ENCODE measurements at regions of chr4 and their contacts with region 1.

Region 1: DNA sequence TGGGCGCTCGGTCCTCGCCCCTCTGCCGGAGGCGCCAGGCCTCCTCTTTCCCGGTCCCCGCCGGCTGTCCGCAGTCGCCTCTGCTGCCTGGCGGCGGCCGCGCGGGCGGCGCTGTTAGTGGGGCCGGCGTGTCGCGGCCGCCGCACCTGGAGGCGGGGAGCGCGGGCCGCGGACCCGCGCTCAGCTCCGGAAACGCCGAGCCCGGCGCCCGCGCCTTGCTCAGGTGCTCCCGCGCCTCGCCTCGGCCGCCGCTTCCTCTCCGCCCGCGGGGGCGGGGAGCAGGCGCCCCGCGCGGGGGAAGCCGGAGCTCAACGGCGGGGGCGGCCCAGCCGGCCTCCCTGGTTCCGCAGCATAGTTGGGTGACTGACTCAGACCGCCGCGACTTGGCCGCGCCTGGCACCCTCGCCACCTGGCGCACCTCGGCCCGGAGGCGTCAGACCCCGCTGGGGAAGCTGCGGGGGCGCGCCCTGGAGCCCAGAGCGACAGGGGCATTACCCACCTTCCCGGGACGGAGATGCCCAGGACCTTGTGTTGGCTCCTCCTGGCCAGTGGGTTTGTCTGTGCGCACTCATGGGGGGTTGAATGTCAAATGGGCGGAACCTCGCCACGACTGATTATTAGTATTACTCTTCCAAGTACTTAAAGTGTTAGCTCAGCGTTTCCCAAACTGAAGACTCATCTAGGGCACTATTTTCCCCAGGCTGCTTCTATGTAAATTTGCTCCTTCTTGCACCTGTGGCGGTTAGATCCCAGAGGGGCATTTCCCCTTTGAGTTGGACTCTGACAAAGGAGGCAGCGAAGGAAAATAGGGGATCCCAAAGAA is at the start of gene ARAP2:
- DNase-seq: peak; percentile 78
- H3K4me3 Mint-ChIP-seq: peak within 1 kb of the TSS; percentile 95
- H3K27ac Mint-ChIP-seq: peak within 1 kb of the TSS; percentile 92
- H3K4me1 Mint-ChIP-seq: peaks cover 40% of the 10 kb centered on the region
- H3K27me3 Mint-ChIP-seq: peaks cover 5% of the 10 kb centered on the region
- total RNA-seq, gene ARAP2: 70.7 to 76.4 TPM

Region 2: GRCh38 chr4:36255577-36255976 is 11.1 kb after region 1 on chr4:
- CTCF ChIA-PET with region 1: interaction called, 37 read pairs
- POLR2A ChIA-PET with region 1: interaction called, 117 read pairs
- DNase-seq: peak; percentile 73
- H3K4me3 Mint-ChIP-seq: peak overlapping the region; percentile 68
- H3K27ac Mint-ChIP-seq: peak overlapping the region; percentile 96
- H3K4me1 Mint-ChIP-seq: peaks cover 46% of the 10 kb centered on the region
- H3K27me3 Mint-ChIP-seq: no peaks in the 10 kb centered on the region

Region 3: GRCh38 chr4:36285784-36286480 is 41.5 kb after region 1 on chr4:
- CTCF ChIA-PET with region 1: interaction called, 27 read pairs
- POLR2A ChIA-PET with region 1: interaction called, 111 read pairs
- DNase-seq: peak; percentile 76
- H3K4me3 Mint-ChIP-seq: peak overlapping the region; percentile 43
- H3K27ac Mint-ChIP-seq: peak overlapping the region; percentile 90
- H3K4me1 Mint-ChIP-seq: peaks cover 69% of the 10 kb centered on the region
- H3K27me3 Mint-ChIP-seq: no peaks in the 10 kb centered on the region

Region 4: GRCh38 chr4:36332023-36332781 is 87.7 kb after region 1 on chr4:
- CTCF ChIA-PET with region 1: interaction called, 3 read pairs
- POLR2A ChIA-PET with region 1: interaction called, 17 read pairs
- DNase-seq: no peak
- H3K4me3 Mint-ChIP-seq: no peak overlapping the region
- H3K27ac Mint-ChIP-seq: no peak overlapping the region
- H3K4me1 Mint-ChIP-seq: peaks cover 23% of the 10 kb centered on the region
- H3K27me3 Mint-ChIP-seq: no peaks in the 10 kb centered on the region

Region 5: GRCh38 chr4:36394352-36394903 is 150.0 kb after region 1 on chr4:
- CTCF ChIA-PET with region 1: interaction called, 13 read pairs
- POLR2A ChIA-PET with region 1: interaction called, 12 read pairs
- DNase-seq: peak; percentile 48
- H3K4me3 Mint-ChIP-seq: peak overlapping the region; percentile 51
- H3K27ac Mint-ChIP-seq: peak overlapping the region; percentile 89
- H3K4me1 Mint-ChIP-seq: peaks cover 16% of the 10 kb centered on the region
- H3K27me3 Mint-ChIP-seq: peaks cover 23% of the 10 kb centered on the region